ENCODE measurements at regions of chr3 and their contacts with region 1.

Region 1: GRCh38 chr3:133578548-133579191 is 5.2 kb downstream of the CDV3 start:
- DNase-seq: no peak
- H3K4me3 ChIP-seq: no peak overlapping the region
- CTCF ChIP-seq: peak; percentile 42

Region 2: DNA sequence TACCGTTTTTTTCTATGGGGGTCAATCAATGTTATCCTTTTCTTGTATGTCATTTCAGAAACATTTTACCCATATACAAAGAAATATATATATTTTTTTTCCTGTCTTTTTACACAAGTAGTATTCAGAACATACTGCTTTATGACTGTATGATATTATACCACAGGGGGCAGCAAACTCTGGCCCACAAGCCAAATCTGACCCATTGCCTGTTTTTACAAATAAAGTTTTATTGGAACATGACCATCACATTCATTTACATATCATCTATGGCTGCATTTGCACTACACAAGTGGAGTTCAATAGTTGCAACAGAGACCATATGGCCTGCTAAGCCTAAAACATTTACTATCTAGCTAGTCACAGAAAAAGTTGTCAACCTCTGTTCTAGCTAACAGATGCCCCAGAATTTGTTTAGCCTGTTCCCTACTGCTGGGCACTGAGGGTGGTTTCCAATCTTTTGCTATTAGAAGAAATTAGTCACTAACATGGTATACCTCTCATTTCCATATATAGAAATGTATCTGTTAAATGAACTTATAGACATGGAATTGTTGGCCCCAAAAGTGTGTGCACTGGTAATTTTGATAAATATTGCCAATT is 121.1 kb before region 1 on chr3:
- CTCF ChIA-PET with region 1: interaction called, 14 read pairs
- POLR2A ChIA-PET with region 1: no interaction called
- DNase-seq: no peak
- H3K4me3 ChIP-seq: no peak overlapping the region
- CTCF ChIP-seq: no peak

Region 3: GRCh38 chr3:133464573-133464972 is 114.1 kb before region 1 on chr3:
- CTCF ChIA-PET with region 1: interaction called, 12 read pairs
- POLR2A ChIA-PET with region 1: no interaction called
- DNase-seq: no peak
- H3K4me3 ChIP-seq: no peak overlapping the region
- CTCF ChIP-seq: peak; percentile 40

Region 4: DNA sequence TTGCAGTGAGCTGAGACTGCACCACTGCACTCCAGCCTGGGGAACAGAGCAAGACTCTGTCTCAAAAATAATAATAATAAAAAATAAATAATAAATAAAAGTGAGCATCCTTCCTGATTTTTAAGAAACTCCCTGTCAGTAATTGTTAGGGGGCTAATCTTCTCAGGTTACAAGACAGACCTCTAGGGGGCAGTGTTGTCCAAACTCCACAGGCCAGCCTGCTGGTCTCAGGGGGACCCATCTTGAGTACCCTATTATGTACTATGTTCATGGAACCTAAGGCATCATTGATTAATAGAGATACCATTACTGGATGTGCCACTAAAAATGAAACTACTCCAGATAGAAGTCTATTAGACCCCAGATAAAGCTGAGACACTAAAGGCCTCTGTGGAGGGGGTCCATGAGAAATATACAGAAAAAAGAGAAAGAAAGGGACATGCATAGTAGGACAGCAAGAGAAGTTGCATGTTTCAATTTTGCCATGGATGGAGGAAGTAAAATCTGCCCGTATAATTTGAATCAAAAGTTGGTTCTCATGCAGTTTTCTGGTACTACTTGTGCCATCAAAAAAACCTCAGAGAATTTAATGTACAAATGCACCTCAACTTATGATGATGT is 90.6 kb before region 1 on chr3:
- CTCF ChIA-PET with region 1: interaction called, 48 read pairs
- POLR2A ChIA-PET with region 1: interaction called, 3 read pairs
- DNase-seq: no peak
- H3K4me3 ChIP-seq: no peak overlapping the region
- CTCF ChIP-seq: peak; percentile 28

Region 5: DNA sequence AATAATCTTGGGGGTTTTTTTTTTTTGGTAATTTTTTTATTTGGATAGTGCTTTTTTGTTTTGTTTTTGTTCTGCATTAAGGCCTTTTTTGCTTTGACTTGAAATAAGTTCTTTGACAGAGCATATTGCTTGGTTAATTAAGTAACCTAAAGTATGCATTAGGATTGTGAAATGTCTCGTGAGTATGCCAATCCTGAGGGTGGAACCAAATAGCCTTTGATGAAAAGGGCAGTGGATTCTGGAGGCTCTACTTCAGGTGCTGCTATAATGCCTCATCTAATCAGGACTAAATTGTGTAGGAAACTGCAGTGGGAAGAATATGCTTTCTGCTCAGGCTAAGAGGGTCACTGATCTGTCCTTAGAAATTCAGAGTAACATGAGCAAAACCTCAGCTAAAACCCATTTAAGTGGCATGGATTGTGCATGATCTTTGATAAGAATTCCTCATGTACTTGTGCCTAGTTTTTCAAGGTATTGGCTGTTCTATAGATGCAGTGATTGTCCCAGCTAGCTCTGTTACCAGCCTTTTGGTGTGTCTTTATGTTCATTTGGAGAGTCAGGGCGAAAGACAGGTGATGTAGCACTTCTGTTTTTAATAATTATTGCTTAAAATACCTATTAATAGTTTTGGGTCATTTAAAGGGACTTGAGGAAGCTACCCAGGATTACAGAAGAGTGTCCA is 10.3 kb after region 1 on chr3:
- CTCF ChIA-PET with region 1: interaction called, 14 read pairs
- POLR2A ChIA-PET with region 1: interaction called, 6 read pairs
- DNase-seq: no peak
- H3K4me3 ChIP-seq: no peak overlapping the region
- CTCF ChIP-seq: no peak

Region 6: GRCh38 chr3:133595341-133595740 is 16.7 kb after region 1 on chr3:
- CTCF ChIA-PET with region 1: interaction called, 11 read pairs
- POLR2A ChIA-PET with region 1: interaction called, 3 read pairs
- DNase-seq: no peak
- H3K4me3 ChIP-seq: no peak overlapping the region
- CTCF ChIP-seq: no peak

Region 7: GRCh38 chr3:133627789-133628188 is 49.1 kb after region 1 on chr3:
- CTCF ChIA-PET with region 1: no interaction called
- POLR2A ChIA-PET with region 1: no interaction called
- DNase-seq: no peak
- H3K4me3 ChIP-seq: no peak overlapping the region
- CTCF ChIP-seq: no peak

Region 8: DNA sequence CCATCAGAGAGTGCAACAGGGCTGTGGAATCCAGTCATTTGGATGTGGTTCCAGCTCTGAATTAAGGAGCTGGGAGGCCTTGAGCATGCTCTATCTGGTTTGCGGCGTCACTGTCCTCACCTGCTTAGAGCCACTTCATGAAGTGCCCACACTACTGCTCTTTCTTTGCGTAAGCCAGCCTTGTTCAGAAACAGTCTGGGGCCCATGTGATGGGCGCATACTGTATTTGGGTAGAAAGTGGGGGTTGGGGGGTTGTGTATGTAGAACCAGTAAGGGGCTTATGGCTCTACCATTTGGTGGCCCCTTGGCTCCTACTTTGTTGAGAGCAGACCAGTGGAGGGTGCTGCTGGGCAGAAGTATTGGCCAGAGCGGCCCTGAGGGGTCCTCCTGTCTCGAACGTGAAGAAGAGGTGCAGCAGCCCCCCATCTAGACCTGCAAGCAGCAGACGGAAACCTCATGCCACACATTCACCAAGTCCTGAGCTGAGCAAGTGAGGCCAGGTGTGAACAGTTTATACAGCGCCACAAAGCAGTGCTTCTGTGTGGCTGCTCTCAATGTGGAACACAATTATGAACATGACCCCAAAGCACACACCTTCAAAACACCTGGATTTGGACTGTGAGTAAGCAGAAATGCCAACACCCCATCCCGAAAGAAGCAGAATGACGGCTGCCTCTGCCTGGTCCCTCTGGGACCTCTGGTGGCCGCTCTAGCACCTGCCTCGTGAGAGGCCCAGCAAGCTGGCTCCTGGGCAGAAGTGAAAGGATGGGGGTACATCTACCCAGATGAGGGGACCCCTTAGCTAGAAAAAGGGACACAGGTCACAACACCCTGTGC is 253.5 kb after region 1 on chr3:
- CTCF ChIA-PET with region 1: no interaction called
- POLR2A ChIA-PET with region 1: no interaction called
- DNase-seq: no peak
- H3K4me3 ChIP-seq: no peak overlapping the region
- CTCF ChIP-seq: no peak